ENCODE measurements at regions of chr1 and their contacts with region 1.

Region 1: DNA sequence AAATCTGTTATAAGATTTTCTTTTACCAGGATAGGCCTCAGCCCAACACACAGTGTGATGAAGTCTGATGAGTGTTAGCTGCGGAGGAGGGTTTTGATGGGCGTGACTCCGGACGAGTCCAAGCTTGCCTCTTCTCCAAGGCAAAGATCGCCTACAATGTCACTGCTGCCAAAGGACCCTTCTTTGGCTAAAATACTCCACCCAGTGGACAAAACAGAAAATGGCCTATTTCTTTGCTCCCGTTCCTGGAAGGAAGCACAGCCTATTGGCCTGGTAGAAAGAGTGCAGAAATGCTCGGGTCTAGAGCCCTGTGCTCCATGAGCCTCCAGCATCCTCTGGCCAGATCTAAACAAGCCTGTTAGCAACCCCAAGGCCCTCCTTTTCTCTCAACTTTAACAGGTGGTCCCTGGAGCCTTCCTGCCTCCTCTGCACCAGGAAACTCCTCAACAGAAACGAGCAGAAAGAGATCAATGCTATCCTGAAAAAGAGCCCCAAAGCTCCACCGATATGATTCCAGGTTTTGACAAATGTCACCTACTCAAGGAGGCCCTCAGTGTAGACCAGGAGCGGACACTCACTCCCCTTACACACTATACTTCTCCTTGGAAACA is 3.4 kb upstream of the CASQ2 start:
- DNase-seq: no peak
- ATAC-seq: peak; percentile 96
- H3K4me3 ChIP-seq: no peak overlapping the region
- H3K27ac ChIP-seq: no peak overlapping the region
- H3K4me1 ChIP-seq: no peaks in the 10 kb centered on the region
- H3K27me3 ChIP-seq: no peaks in the 10 kb centered on the region
- CTCF ChIP-seq: peak; percentile 75

Region 2: DNA sequence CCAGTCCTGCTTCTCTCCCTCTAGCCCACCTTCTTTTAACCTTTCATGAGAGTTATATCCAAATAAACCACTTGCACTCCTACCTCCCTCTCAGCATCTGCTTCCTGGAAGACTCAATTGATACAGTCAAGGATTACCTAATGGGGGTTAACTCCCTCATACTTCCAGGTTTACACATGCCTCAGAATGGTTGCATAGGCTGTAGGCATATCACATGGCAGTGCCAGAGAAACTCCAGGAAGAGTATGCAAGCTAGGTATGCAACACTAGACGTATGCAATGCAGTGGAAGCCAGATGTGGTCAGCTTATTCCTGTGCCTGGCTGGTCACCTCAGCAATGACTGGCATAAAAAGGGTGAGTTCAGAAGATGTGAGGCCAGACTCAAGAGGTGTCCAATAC is 162.9 kb before region 1 on chr1:
- intact Hi-C with region 1: loop called (anchors 10 kb)
- DNase-seq: no peak
- ATAC-seq: no peak
- H3K4me3 ChIP-seq: no peak overlapping the region
- H3K27ac ChIP-seq: no peak overlapping the region
- H3K4me1 ChIP-seq: no peaks in the 10 kb centered on the region
- H3K27me3 ChIP-seq: no peaks in the 10 kb centered on the region
- CTCF ChIP-seq: no peak

Region 3: GRCh38 chr1:115717541-115717940 is 54.4 kb before region 1 on chr1:
- intact Hi-C with region 1: loop called (anchors 5 kb)
- DNase-seq: no peak
- ATAC-seq: peak; percentile 52
- H3K4me3 ChIP-seq: no peak overlapping the region
- H3K27ac ChIP-seq: no peak overlapping the region
- H3K4me1 ChIP-seq: peaks cover 3% of the 10 kb centered on the region
- H3K27me3 ChIP-seq: no peaks in the 10 kb centered on the region
- CTCF ChIP-seq: peak; percentile 62

Region 4: GRCh38 chr1:115877511-115877910 is 105.6 kb after region 1 on chr1:
- intact Hi-C with region 1: no loop called
- DNase-seq: no peak
- ATAC-seq: no peak
- H3K4me3 ChIP-seq: no peak overlapping the region
- H3K27ac ChIP-seq: no peak overlapping the region
- H3K4me1 ChIP-seq: no peaks in the 10 kb centered on the region
- H3K27me3 ChIP-seq: no peaks in the 10 kb centered on the region
- CTCF ChIP-seq: no peak

Region 5: GRCh38 chr1:115929881-115930280 is 157.9 kb after region 1 on chr1:
- intact Hi-C with region 1: no loop called
- DNase-seq: no peak
- ATAC-seq: no peak
- H3K4me3 ChIP-seq: no peak overlapping the region
- H3K27ac ChIP-seq: no peak overlapping the region
- H3K4me1 ChIP-seq: no peaks in the 10 kb centered on the region
- H3K27me3 ChIP-seq: no peaks in the 10 kb centered on the region
- CTCF ChIP-seq: no peak

Measured in upper lobe of right lung (tissue), 1 donor.